Heart right ventricle (tissue), 16 donors: ENCODE measurements at regions of chr6 and their contacts with region 1.

Region 1: GRCh38 chr6:30877419-30878371 is 6.6 kb upstream of the DDR1 start:
- DNase-seq: peak; percentile 86 to 92
- ATAC-seq: peak; percentile 87 to 92 (median 89)
- H3K4me3 ChIP-seq: peak overlapping the region in 9 of 10 donors; percentile 14 to 49 (median 40)
- H3K27ac ChIP-seq: peak overlapping the region in 9 of 10 donors; percentile 3 to 86 (median 78)
- H3K4me1 ChIP-seq: peaks cover 9 to 33% (median 18%) of the 10 kb centered on the region in 9 donors
- H3K27me3 ChIP-seq: no peaks in the 10 kb centered on the region
- CTCF ChIP-seq: peak; percentile 71 to 95 (median 88)

Region 2: GRCh38 chr6:30672445-30673253 is 205.0 kb before region 1 on chr6 and contains the start of gene DHX16:
- intact Hi-C with region 1: loop called in 5 of 10 experiments (anchors 5 kb)
- DNase-seq: peak; percentile 94 to 98
- ATAC-seq: peak; percentile 86 to 95 (median 91)
- H3K4me3 ChIP-seq: peak within 1 kb of the TSS; percentile 70 to 99 (median 89)
- H3K27ac ChIP-seq: peak within 1 kb of the TSS in 9 of 10 donors; percentile 57 to 91 (median 79)
- H3K4me1 ChIP-seq: peaks cover 0 to 30% (median 18%) of the 10 kb centered on the region in 9 donors
- H3K27me3 ChIP-seq: no peaks in the 10 kb centered on the region
- CTCF ChIP-seq: peak; percentile 79 to 93 (median 87)
- total RNA-seq, gene DHX16: 15.9 to 22.9 (median 20.9) TPM

Region 3: DNA sequence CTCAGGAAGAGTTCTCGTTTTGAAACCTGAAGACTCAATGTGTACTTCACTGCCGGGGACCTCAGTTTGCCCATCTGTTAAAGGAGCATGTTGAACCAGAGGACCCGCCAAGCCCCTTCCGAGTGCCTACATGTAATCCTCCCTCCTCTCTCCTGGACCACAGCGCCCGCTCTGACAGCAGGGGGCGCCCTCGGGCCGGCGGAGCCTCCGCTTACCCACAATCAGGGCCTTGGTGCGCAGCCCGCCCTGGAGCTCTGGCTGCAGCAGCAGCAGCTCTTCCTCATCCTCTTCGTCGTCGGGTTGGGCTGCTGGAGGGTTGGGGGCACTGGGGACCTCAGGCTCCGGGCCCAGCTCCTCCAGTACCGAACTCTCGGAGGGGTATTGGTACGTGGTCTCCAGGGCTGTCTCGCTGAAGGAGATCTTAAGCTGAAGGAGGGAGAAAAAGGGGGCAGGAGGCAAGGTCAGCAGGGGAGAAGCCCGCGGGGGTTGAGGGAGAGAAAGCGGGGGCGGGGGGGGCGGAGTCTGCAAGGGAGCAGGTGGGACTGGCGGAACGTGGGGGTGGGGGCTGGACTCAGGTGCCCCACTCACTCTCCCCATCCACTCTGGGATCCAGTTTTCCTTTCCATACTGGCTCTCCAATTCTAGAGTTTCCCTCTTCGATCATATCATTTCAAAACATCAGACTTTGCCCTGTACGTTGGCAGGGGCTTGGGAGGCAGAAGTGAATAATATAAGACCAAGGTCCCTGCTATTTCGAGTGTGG is 198.6 kb before region 1 on chr6:
- intact Hi-C with region 1: loop called in 7 of 10 experiments (anchors 5 to 10 kb)
- DNase-seq: peak; percentile 87 to 92
- ATAC-seq: peak; percentile 71 to 84 (median 74)
- H3K4me3 ChIP-seq: peak overlapping the region in 7 of 10 donors; percentile 3 to 75 (median 22)
- H3K27ac ChIP-seq: peak overlapping the region in 8 of 10 donors; percentile 8 to 100 (median 34)
- H3K4me1 ChIP-seq: peaks cover 14 to 57% (median 52%) of the 10 kb centered on the region in 9 donors
- H3K27me3 ChIP-seq: no peaks in the 10 kb centered on the region
- CTCF ChIP-seq: peak in 8 of 9 donors; percentile 93 to 97 (median 96)

Region 4: GRCh38 chr6:30752157-30752927 is 125.4 kb before region 1 on chr6:
- intact Hi-C with region 1: loop called in 1 of 10 experiments (anchors 5 kb)
- DNase-seq: peak; percentile 88 to 95
- ATAC-seq: peak; percentile 91 to 96 (median 94)
- H3K4me3 ChIP-seq: no peak overlapping the region
- H3K27ac ChIP-seq: peak overlapping the region; percentile 82 to 99 (median 94)
- H3K4me1 ChIP-seq: peaks cover 8 to 65% (median 41%) of the 10 kb centered on the region in 9 donors
- H3K27me3 ChIP-seq: no peaks in the 10 kb centered on the region
- CTCF ChIP-seq: peak in 3 of 9 donors; percentile 11 to 29 (median 21)

Region 5: GRCh38 chr6:31197559-31198305 is 320.0 kb after region 1 on chr6:
- intact Hi-C with region 1: no loop called
- DNase-seq: peak; percentile 88 to 95
- ATAC-seq: peak; percentile 89 to 95 (median 92)
- H3K4me3 ChIP-seq: peak overlapping the region; percentile 47 to 79 (median 64)
- H3K27ac ChIP-seq: peak overlapping the region; percentile 91 to 100 (median 98)
- H3K4me1 ChIP-seq: peaks cover 0 to 43% (median 19%) of the 10 kb centered on the region in 9 donors
- H3K27me3 ChIP-seq: no peaks in the 10 kb centered on the region
- CTCF ChIP-seq: no peak